ENCODE measurements at regions of chr2 and their contacts with region 1.

Region 1: GRCh38 chr2:18560031-18560796 is at the start of gene RDH14:
- DNase-seq: peak; percentile 76
- H3K4me3 ChIP-seq: peak within 1 kb of the TSS; percentile 65
- CTCF ChIP-seq: no peak

Region 2: GRCh38 chr2:18605115-18605514 is 44.9 kb after region 1 on chr2:
- in situ Hi-C with region 1: loop called (anchors 5 kb)
- DNase-seq: no peak
- H3K4me3 ChIP-seq: no peak overlapping the region
- CTCF ChIP-seq: no peak